Dorsolateral prefrontal cortex (tissue), 120 donors: ENCODE measurements at regions of chr11 and their contacts with region 1.

Region 1: DNA sequence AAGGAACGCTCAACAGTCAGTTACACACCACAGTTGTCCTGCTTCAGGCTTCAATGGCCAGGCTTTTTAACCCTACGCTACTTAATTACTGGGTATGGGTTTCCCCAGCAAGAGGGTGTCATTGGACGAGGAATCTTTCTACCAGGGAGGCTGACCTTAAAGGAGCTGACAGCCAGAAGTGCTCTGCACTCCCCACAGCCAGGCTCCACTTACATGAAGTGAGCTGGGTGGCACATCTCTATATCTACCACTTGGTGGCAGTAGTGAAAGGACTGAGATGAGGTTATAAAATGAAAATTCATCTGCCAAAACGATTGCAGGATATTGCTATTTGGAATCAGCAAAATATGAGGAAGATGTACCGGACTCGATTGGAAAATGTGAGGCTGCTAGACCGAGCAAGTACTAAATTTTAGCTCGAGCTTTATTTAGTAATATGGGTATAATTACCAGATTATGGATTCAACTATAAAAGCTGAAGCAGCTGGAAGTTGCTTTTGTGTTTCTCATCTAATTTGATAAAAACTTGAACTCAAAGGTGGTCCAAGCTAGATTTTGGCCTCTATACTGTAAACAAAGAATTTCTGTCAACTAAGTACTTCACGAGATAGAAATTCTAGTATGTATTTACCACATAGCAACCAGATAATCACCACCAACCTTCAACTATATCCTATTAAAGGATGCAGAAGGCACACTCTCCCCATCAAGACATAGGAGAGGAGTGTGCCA is 53.9 kb upstream of the CEP126 start:
- DNase-seq: peak in 5 of 10 donors; percentile 9 to 38 (median 35)
- H3K4me3 ChIP-seq: no peak overlapping the region
- H3K27ac ChIP-seq: no peak overlapping the region
- H3K27me3 ChIP-seq: no peaks in the 10 kb centered on the region
- CTCF ChIP-seq: peak in 55 of 56 donors; percentile 58 to 92 (median 79)

Region 2: DNA sequence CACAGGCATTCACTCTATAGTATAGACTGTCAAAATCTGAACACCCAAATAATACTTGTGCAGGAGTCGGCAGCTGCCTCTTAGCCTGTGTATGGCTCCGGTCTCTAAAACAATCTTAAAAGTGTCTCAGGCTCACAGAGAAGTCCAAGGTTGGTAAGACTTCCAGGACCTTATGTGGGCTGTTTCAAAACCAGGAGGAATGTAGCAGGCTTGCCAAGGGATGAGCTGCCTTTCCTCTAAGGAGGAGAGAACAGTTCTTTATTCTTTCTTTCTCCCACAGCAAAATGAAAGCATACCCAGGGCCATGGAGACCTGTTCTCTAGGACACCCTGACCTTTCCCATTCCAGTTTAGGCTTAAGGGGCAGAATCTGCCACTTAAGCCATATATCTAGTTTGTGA is 453.5 kb before region 1 on chr11:
- intact Hi-C with region 1: no loop called
- DNase-seq: no peak
- H3K4me3 ChIP-seq: no peak overlapping the region
- H3K27ac ChIP-seq: no peak overlapping the region
- H3K27me3 ChIP-seq: peaks cover 0 to 5% (median 0%) of the 10 kb centered on the region in 45 donors
- CTCF ChIP-seq: no peak

Region 3: DNA sequence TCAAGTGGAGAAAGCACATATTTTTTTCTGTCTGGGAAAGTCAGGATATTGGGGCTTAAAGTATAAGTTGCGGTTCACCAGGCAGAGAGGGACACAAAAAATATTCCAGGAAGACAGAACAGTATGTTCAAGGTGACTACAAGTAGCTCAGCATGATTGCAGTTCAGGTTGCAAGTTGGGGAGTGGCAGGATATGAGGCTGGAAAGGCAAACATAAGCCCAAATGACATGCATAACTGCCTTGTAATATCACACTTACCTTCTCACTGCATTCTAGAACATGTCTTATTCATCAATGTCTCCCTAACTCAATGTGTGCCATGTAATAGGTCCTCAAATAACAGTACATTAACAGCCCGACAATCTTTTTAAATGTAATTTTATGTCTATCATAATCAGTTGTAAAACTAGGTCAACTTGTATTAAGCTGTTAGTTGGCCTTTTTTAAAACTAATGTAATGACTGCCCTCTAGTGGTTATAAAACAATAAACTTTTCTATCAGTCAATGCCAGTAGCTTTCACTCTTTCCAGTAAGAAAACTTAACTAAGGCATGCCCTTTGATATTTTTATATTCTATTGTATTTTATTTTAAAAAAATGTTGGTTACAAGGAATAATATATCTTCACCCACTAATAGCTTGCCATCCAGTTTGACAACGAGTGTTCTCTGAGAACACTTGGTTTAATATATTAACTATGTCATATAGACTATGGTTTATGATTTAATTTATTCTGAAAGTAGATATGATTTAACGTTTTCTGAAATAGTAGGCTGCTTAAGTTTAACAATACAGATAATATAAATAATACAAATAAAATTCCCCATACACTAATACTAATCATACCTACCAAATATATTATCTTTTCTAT is 146.9 kb after region 1 on chr11:
- intact Hi-C with region 1: loop called (anchors 1 to 2 kb)
- DNase-seq: no peak
- H3K4me3 ChIP-seq: no peak overlapping the region
- H3K27ac ChIP-seq: no peak overlapping the region
- H3K27me3 ChIP-seq: no peaks in the 10 kb centered on the region
- CTCF ChIP-seq: peak; percentile 58 to 92 (median 76)